Heart left ventricle (tissue), 16 donors: ENCODE measurements at regions of chr9 and their contacts with region 1.

Region 1: DNA sequence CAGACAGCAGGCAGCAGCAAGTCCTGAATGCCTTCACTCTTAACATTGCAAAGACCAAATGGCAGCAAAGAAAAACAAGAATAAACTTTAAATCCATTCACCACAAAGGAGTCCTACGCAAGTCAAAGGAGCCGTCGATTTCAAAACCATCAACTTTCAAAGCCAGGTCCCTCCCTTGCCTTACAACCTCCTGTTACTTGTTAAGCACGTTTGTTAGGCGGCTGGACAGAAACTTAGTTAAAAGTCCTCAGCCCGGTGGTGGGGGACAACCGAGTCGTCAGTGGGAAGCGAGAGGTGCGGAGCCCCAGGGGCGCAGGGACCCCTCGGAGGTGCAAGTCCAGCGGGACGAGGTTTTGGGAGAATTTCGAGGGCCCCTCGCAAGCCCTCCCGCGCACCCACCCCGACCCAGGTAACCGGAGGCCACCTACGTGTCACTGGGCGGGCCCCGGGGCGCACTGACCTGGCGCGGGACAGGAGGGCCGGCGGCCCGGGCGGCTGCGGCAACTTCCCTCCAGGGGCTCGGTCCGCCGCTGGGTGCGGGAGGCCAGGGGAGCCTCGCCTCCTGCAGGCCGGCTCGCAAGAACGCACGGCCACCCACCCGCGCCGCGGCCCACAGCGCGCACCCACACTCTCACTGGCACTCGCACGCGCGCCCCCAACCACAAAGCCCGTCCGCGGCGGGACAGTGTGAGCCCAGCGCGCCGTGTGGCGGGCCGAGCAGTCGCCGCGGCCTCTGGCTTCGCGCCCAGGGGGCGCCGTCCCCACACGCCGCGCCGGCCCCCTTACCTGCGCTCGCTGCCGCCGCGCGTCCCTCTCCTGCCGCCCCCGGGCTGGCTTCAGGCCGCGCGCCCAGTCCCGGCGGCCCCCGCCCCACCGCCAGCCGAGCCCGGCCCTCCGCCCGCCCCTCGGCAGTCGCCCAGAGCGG is 627 bp downstream of the LPAR1 start:
- DNase-seq: peak in 4 of 5 donors; percentile 15 to 70 (median 27)
- ATAC-seq: peak in 2 of 4 donors; percentile 35 to 38
- H3K4me3 ChIP-seq: peak overlapping the region; percentile 22 to 73 (median 60)
- H3K27ac ChIP-seq: peak overlapping the region; percentile 53 to 82 (median 78)
- H3K4me1 ChIP-seq: peaks cover 0 to 31% (median 2%) of the 10 kb centered on the region in 12 donors
- H3K27me3 ChIP-seq: peaks cover 4 to 59% (median 34%) of the 10 kb centered on the region in 9 donors
- CTCF ChIP-seq: peak in 1 of 12 donors; percentile 5
- POLR2A ChIP-seq: no peak

Region 2: GRCh38 chr9:110919609-110920008 is 118.0 kb before region 1 on chr9:
- intact Hi-C with region 1: loop called in 1 of 10 experiments (anchors 10 kb)
- DNase-seq: peak in 1 of 5 donors; percentile 16
- ATAC-seq: peak in 3 of 4 donors; percentile 65 to 88 (median 71)
- H3K4me3 ChIP-seq: no peak overlapping the region
- H3K27ac ChIP-seq: peak overlapping the region in 5 of 12 donors; percentile 9 to 62 (median 52)
- H3K4me1 ChIP-seq: peaks cover 0 to 23% (median 0%) of the 10 kb centered on the region in 12 donors
- H3K27me3 ChIP-seq: no peaks in the 10 kb centered on the region
- CTCF ChIP-seq: no peak
- POLR2A ChIP-seq: no peak

Region 3: DNA sequence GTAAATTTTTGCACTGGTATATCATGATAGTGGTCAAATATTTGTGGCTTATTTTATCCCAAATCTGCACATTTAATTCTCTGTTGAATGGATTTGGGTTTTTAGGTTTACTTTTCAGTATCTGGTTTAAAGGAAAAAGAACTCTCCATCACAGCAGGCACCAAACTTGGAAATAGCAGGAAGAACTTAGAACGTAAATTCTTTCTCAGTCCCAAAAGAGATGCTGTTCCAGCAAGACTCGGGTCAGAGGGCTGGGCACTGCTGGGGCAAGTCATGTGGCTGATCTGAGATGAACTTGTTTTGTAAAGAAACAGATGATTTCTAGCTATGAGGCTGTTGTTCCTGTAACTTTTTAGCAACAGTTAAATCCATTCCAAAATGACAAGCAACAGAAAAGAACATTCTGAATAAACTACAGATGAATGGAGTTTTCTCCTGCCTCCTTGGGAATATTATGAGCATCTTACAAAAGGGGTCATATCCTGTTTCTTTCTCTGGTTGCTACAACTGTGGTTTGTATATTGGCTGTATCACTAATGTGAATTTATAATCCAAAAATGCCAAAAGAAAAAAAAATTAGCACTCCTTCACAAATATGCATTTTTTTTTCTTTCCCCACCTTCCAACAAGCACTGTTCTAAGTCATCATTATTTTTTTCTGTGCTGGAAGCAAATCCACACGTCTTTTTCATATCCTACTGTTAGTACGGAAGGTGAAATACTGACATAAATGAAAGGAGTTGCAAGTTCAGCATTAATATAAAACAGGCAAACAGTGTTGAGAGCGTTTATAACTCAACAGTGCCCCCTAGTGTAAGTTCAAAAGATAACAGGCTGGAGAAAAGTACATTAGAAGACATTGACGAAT is 261.3 kb after region 1 on chr9:
- intact Hi-C with region 1: loop called in 1 of 10 experiments (anchors 5 kb)
- DNase-seq: peak; percentile 20 to 69 (median 32)
- ATAC-seq: peak; percentile 74 to 87 (median 78)
- H3K4me3 ChIP-seq: peak overlapping the region in 3 of 12 donors; percentile 4 to 21 (median 19)
- H3K27ac ChIP-seq: peak overlapping the region in 10 of 12 donors; percentile 4 to 67 (median 29)
- H3K4me1 ChIP-seq: no peaks in the 10 kb centered on the region
- H3K27me3 ChIP-seq: peaks cover 0 to 6% (median 0%) of the 10 kb centered on the region in 9 donors
- CTCF ChIP-seq: peak; percentile 62 to 86 (median 79)
- POLR2A ChIP-seq: no peak

Region 4: GRCh38 chr9:111427186-111427585 is 389.5 kb after region 1 on chr9:
- intact Hi-C with region 1: no loop called
- DNase-seq: no peak
- ATAC-seq: no peak
- H3K4me3 ChIP-seq: no peak overlapping the region
- H3K27ac ChIP-seq: no peak overlapping the region
- H3K4me1 ChIP-seq: peaks cover 0 to 7% (median 0%) of the 10 kb centered on the region in 12 donors
- H3K27me3 ChIP-seq: no peaks in the 10 kb centered on the region
- CTCF ChIP-seq: no peak
- POLR2A ChIP-seq: no peak